Activated naive CD4-positive, alpha-beta T cell treated with anti-CD3 and anti-CD28 coated beads for 36 hours (primary cell): ENCODE measurements at regions of chr5 and their contacts with region 1.

Region 1: GRCh38 chr5:126808521-126808988 is 31.6 kb downstream of the LMNB1 start:
- DNase-seq: no peak
- H3K4me3 Mint-ChIP-seq: no peak overlapping the region
- H3K27ac Mint-ChIP-seq: peak overlapping the region; percentile 98
- H3K4me1 Mint-ChIP-seq: peaks cover 60% of the 10 kb centered on the region
- H3K27me3 Mint-ChIP-seq: no peaks in the 10 kb centered on the region

Region 2: DNA sequence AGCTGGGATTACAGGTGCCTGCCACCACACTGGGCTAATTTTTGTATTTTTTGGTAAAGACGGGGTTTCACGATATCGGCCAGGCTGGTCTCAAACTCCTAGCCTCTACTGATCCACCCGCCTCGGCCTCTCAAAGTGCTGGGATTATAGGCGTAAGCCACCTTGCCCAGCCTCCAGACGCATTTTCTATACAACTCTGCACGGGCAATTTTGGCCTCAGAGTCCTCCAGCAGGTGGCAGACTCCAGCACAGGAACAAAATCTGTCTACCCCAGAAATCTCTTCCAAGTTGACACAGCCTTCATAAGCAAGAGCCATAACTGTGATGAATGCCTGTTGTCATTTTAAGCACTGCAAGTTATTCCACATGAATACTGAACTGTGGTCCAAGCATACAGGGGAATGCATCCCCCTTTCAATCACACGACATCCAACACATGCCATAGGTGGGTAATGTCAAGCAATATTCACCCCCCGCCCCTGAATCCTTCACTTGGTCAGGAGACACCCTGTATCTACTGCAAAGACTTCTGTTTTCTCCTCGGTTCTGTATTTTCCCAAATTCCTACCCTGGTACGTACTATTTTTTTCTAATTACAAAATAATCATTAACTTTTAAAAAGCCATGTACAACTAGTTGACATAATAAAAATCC is 264.3 kb before region 1 on chr5:
- CTCF ChIA-PET with region 1: no interaction called
- intact Hi-C with region 1: no loop called
- DNase-seq: peak; percentile 68
- H3K4me3 Mint-ChIP-seq: no peak overlapping the region
- H3K27ac Mint-ChIP-seq: no peak overlapping the region
- H3K4me1 Mint-ChIP-seq: no peaks in the 10 kb centered on the region
- H3K27me3 Mint-ChIP-seq: no peaks in the 10 kb centered on the region

Region 3: DNA sequence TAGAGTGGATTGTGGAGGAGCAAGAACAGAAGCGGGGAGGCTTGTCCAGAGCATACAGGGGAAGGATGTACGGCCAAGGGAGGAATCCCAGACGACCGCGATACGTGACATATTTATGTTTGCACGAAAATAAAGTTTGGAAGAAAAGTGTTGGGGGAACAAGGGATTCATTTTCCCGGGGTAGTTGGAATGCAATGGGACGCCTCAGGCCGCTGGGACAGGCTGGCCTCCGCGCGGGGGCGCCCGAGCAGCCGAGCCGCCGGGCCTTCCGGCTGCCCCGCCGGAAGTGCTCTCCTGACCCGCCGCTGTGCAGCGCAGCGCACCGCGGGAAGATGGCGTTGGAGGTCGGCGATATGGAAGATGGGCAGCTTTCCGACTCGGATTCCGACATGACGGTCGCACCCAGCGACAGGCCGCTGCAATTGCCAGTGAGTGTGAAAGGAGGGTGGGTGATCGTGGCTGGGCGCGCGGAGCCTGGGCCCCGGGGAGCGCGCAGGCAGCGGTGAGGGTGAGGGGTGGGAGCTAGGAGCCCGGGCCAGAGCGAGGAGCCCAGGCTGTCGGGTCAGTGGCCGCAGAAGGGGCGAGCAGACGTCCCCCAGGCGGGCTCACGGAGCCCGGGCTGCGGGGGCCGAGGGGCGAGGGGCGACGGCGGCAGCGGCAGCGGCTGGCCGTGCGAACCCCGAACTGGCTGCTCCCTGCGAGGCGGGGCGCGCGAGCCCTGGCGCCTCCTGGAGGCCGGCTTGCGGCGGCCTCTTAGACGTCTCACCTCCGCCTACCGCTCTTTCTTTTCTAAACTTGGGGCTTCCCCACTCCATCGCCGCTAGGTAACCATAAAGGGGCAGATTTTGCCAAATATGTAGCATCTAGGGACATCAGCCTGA is 207.7 kb before region 1 on chr5 and contains the start of gene PHAX:
- CTCF ChIA-PET with region 1: no interaction called
- intact Hi-C with region 1: loop called (anchors 1 kb)
- DNase-seq: peak; percentile 78
- H3K4me3 Mint-ChIP-seq: peak within 1 kb of the TSS; percentile 90
- H3K27ac Mint-ChIP-seq: peak within 1 kb of the TSS; percentile 93
- H3K4me1 Mint-ChIP-seq: peaks cover 34% of the 10 kb centered on the region
- H3K27me3 Mint-ChIP-seq: no peaks in the 10 kb centered on the region
- total RNA-seq, gene PHAX: 34.9 to 37.2 TPM

Region 4: DNA sequence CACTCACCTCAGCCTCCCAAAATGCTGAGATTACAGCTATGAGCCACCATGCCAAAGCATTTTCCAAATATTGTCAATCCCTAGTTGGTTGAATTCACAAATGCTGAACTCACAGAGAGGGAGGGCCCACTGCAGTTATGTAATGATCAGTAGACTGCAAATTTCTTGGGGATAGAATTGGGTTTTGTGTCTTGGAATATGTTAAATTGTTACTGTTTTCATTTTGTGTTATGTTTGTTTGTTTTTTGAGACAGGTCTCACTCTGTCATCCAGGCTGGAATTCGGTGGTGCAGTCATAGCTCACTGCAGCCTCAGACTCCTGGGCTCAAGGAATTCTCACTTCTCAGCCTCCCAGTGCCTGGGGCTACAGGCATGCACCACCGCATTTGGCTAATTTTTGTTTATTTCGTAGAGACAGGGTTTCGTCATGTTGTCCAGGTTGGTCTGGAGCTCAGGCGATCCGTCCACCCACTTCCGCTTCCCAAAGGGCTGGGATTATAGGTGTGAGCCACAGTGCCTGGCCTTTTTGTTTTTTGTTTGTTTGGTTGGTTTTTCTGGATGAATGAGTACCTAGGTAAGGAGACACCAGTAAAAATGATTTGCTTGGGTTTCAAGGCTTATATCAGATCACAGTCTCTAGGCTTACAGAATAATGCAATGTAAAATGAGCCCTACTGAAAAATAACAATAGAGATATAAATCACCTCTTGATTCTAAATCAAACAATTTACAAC is 63.1 kb before region 1 on chr5:
- CTCF ChIA-PET with region 1: no interaction called
- intact Hi-C with region 1: loop called (anchors 1 kb)
- DNase-seq: no peak
- H3K4me3 Mint-ChIP-seq: no peak overlapping the region
- H3K27ac Mint-ChIP-seq: peak overlapping the region; percentile 24
- H3K4me1 Mint-ChIP-seq: peaks cover 41% of the 10 kb centered on the region
- H3K27me3 Mint-ChIP-seq: no peaks in the 10 kb centered on the region

Region 5: DNA sequence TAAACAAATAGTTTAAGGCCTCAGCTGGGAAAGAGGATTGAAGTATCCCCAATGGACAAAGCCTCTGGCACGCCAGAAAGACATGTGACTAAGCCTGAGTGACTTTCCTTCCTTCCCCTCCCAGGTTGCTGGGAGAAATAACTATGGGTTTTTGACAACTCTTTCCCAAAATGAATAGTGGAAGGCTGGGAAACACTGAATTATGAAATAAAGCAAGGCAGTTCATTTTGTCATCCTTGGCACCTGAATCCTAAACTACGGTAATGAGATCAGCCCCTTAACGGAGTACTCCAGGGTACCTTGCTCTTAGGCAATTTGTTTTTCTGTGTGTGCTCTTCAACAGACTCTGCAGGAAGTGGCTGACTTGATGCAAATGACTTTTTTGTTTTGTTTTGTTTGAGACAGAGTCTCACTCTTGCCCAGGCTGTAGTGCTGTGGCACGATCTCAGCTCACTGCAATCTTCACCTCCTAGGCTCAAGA is 43.6 kb after region 1 on chr5:
- CTCF ChIA-PET with region 1: no interaction called
- intact Hi-C with region 1: loop called (anchors 1 kb)
- DNase-seq: peak; percentile 24
- H3K4me3 Mint-ChIP-seq: no peak overlapping the region
- H3K27ac Mint-ChIP-seq: peak overlapping the region; percentile 81
- H3K4me1 Mint-ChIP-seq: peaks cover 50% of the 10 kb centered on the region
- H3K27me3 Mint-ChIP-seq: no peaks in the 10 kb centered on the region

Region 6: DNA sequence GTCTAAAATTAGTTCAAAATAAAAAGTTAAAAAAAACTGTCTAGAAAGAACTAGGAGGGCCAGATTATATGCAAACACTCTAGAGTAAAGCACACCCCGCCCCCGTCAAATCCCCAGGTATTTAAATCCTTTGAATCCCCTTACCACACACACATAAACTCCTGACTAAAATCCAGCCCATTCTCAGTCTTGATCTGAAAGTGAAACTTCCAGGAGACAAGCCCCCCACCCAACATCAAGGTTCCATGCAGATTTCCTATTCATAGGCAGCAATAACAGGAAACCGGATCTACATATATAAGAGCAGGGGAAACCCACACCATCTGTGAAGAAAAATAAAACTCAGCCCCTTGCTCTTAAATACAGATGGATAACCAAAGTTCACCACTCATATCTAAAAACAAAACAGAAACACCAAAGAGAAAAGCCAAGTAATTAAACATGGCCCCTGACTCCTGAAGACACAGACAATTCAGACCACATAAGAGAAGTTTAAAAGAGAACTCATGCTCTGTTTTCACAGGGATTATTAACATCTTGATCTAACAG is 179.5 kb after region 1 on chr5:
- CTCF ChIA-PET with region 1: no interaction called
- intact Hi-C with region 1: loop called (anchors 1 kb)
- DNase-seq: peak; percentile 77
- H3K4me3 Mint-ChIP-seq: peak overlapping the region; percentile 20
- H3K27ac Mint-ChIP-seq: peak overlapping the region; percentile 76
- H3K4me1 Mint-ChIP-seq: peaks cover 51% of the 10 kb centered on the region
- H3K27me3 Mint-ChIP-seq: no peaks in the 10 kb centered on the region

Region 7: DNA sequence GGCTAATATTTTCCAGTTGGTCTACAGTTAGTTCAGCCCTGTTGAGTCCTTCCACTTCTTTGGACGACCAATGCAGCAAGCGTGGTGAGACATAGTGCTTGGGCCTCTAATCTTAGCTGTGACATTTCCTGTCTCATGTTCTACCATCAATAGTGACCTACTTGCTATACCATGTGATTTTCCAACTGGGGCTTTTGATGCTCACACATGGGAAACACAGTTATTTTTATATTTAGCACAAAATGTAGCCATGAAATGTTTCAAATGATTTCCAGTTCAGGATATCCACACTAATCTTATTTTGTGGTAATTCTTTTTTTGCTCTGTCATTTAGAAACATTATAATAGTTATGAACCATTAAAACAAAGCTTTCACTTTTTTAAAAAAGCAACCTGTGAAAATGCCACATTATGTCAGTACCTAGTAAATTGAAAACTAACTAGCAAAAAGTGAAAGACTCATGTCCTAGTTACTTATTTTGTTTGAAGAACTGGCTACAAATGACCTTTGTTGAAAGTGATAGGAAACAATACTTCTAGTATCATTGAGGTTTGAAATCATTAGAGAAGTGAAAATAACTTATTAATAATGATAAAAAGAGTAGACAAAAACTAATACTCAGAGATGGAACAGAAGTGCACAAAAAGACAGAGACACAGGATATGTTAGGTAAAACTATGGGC is 203.5 kb after region 1 on chr5:
- CTCF ChIA-PET with region 1: no interaction called
- intact Hi-C with region 1: loop called (anchors 1 kb)
- DNase-seq: peak; percentile 35
- H3K4me3 Mint-ChIP-seq: no peak overlapping the region
- H3K27ac Mint-ChIP-seq: peak overlapping the region; percentile 78
- H3K4me1 Mint-ChIP-seq: peaks cover 56% of the 10 kb centered on the region
- H3K27me3 Mint-ChIP-seq: no peaks in the 10 kb centered on the region